ENCODE measurements at regions of chr10 and their contacts with region 1.

Region 1: GRCh38 chr10:43120929-43121314 is 17.3 kb upstream of the CSGALNACT2 start:
- DNase-seq: peak; percentile 94
- ATAC-seq: peak; percentile 97
- H3K4me3 Mint-ChIP-seq: peak overlapping the region; percentile 36
- H3K27ac Mint-ChIP-seq: peak overlapping the region; percentile 97
- H3K4me1 Mint-ChIP-seq: peaks cover 50% of the 10 kb centered on the region
- H3K27me3 Mint-ChIP-seq: no peaks in the 10 kb centered on the region

Region 2: GRCh38 chr10:43138021-43138756 is 17.3 kb after region 1 on chr10 and contains the start of gene CSGALNACT2:
- CTCF ChIA-PET with region 1: interaction called, 49 read pairs
- DNase-seq: peak; percentile 91
- ATAC-seq: peak; percentile 78
- H3K4me3 Mint-ChIP-seq: peak within 1 kb of the TSS; percentile 97
- H3K27ac Mint-ChIP-seq: peak within 1 kb of the TSS; percentile 100
- H3K4me1 Mint-ChIP-seq: peaks cover 73% of the 10 kb centered on the region
- H3K27me3 Mint-ChIP-seq: no peaks in the 10 kb centered on the region
- total RNA-seq, gene CSGALNACT2: 38.0 to 39.7 TPM